ENCODE measurements at regions of chr1 and their contacts with region 1.

Region 1: DNA sequence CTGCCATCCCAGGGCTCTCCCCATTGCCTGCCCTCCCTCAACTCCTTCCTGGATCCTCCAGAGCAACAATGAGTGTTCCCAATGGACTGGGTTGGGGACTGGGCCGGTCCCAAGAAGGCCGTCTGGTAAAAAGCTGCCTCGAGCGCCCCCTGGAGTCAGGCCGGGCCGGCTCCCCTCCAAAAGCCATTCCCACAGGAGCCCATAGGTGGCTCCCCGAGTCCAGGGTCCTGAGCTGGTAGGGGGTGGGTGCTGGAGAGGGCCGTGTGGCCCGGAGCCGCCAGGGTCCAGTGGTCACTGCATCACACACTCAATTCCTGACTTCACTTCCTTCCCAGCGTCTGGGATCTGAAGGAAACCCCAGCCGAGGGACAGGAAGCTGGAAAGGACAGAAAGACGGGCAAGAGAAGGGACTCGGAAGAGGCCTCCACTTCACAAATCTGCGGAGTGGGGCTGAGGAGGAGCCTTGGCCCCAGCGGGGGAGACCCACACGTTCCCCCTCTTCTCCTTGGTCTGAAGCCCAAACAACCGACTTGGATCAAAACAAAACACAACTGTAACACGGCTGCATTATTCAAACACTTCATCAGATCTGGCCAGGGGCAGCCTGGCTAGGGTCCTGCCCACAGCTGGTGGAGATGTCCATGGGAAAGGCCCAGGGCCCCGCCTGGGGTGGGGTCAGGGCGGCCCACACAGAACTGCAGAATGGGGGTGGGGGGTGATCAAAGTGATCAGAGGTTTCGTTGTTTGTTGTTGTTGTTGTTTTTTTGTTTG is 10.9 kb upstream of the ALDH4A1 start:
- DNase-seq: peak; percentile 95
- H3K4me3 ChIP-seq: no peak overlapping the region; a peak in 1 of 4 replicates
- H3K27ac ChIP-seq: no peak overlapping the region
- H3K4me1 ChIP-seq: no peaks in the 10 kb centered on the region; a peak in 1 of 4 replicates
- H3K27me3 ChIP-seq: no peaks in the 10 kb centered on the region
- CTCF ChIP-seq: peak; percentile 98
- EP300 ChIP-seq: no peak
- RAD21 ChIP-seq: peak; percentile 88

Region 2: DNA sequence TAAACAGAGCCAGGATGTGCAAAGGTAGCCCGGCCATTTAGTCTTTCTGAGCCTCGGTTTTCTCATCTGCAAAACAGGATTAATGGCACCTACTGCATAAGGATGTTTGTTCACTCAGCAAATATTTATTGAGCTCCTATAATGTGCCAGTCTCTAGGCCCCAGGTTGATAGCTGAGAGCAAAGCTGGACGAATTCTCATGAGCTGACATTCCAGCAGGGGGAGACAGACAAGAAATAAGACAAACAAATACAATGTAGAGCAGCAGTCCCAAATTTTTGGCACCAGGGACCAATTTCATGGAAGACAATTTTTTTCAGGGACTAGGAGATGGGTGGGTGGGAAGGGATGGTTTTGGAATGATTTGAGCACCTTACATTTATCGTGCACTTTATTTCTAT is 356.9 kb before region 1 on chr1:
- CTCF ChIA-PET with region 1: no interaction called
- POLR2A ChIA-PET with region 1: no interaction called
- DNase-seq: peak; percentile 42
- H3K4me3 ChIP-seq: no peak overlapping the region; a peak in 1 of 4 replicates
- H3K27ac ChIP-seq: no peak overlapping the region
- H3K4me1 ChIP-seq: no peaks in the 10 kb centered on the region
- H3K27me3 ChIP-seq: no peaks in the 10 kb centered on the region; the same call in 1 of the 2 replicates
- CTCF ChIP-seq: peak; percentile 44
- EP300 ChIP-seq: no peak
- RAD21 ChIP-seq: peak; percentile 26

Region 3: GRCh38 chr1:18736958-18737357 is 176.3 kb before region 1 on chr1:
- CTCF ChIA-PET with region 1: no interaction called
- POLR2A ChIA-PET with region 1: no interaction called
- DNase-seq: no peak
- H3K4me3 ChIP-seq: no peak overlapping the region
- H3K27ac ChIP-seq: no peak overlapping the region
- H3K4me1 ChIP-seq: no peaks in the 10 kb centered on the region
- H3K27me3 ChIP-seq: no peaks in the 10 kb centered on the region
- CTCF ChIP-seq: no peak
- EP300 ChIP-seq: no peak
- RAD21 ChIP-seq: no peak

Region 4: GRCh38 chr1:18902523-18903290 is 10.5 kb before region 1 on chr1 and contains the start of gene ALDH4A1:
- CTCF ChIA-PET with region 1: interaction called, 39 read pairs
- POLR2A ChIA-PET with region 1: no interaction called
- DNase-seq: peak; percentile 98
- H3K4me3 ChIP-seq: peak within 1 kb of the TSS; percentile 93 to 94
- H3K27ac ChIP-seq: peak within 1 kb of the TSS; percentile 76 to 93
- H3K4me1 ChIP-seq: peaks cover 9 to 16% of the 10 kb centered on the region in 2 experiments; a peak in 2 of 4 replicates
- H3K27me3 ChIP-seq: no peaks in the 10 kb centered on the region
- CTCF ChIP-seq: no peak
- EP300 ChIP-seq: 0 out of 4 replicates have a peak, but pooled peaks of 1 of the 2 experiments have one; percentile 36
- RAD21 ChIP-seq: no peak
- polyA plus RNA-seq, gene ALDH4A1: 18.5 and 26.2 TPM in 2 replicates

Region 5: DNA sequence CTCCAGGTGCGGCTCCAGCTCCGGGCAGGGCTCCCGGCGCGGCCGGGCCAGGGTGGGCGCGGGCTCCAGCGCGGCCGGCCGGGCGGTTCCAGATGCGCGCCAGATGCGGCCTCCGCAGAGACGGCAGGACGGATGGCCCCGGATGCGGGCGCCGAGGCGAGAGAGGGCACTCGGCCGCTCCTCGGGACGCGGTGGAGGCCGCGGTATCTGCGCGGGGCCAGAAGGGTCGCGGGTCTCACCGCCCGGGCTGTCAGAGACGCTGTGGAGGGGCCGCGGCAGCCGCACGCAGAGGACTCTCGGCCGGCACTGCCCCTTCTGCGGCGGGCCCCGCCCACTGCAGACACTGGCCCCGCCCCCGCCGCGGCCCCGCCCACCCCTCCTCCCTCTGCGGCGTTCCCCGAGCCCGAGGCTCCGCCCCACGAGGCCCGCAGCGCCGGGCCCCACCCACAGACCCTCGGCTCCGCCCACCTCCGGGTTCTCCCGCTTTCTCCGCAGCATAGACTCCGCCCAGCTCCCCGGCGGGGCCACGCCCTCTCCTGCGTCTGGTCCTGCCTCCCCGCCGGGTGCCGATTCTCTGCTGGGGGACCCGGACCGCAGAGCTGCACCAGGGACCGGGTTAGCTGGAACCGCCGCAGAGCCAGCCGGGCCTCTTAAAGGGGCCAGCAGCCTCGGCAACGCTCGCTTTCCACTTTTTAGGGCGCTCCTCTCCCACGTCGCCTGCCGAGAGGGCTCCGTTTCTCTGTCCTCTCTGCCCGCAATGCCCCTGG is 43.3 kb after region 1 on chr1 and contains the start of gene IFFO2:
- CTCF ChIA-PET with region 1: interaction called, 33 read pairs
- POLR2A ChIA-PET with region 1: no interaction called
- DNase-seq: peak; percentile 100
- H3K4me3 ChIP-seq: peak within 1 kb of the TSS; percentile 72 to 77
- H3K27ac ChIP-seq: peak within 1 kb of the TSS in 1 of 2 experiments; percentile 39; a peak in 2 of 4 replicates
- H3K4me1 ChIP-seq: peaks cover 5 to 17% of the 10 kb centered on the region in 2 experiments; a peak in 2 of 4 replicates
- H3K27me3 ChIP-seq: no peaks in the 10 kb centered on the region
- CTCF ChIP-seq: no peak
- EP300 ChIP-seq: no peak
- RAD21 ChIP-seq: no peak
- polyA plus RNA-seq, gene IFFO2: 10.5 TPM in 2 replicates

Region 6: DNA sequence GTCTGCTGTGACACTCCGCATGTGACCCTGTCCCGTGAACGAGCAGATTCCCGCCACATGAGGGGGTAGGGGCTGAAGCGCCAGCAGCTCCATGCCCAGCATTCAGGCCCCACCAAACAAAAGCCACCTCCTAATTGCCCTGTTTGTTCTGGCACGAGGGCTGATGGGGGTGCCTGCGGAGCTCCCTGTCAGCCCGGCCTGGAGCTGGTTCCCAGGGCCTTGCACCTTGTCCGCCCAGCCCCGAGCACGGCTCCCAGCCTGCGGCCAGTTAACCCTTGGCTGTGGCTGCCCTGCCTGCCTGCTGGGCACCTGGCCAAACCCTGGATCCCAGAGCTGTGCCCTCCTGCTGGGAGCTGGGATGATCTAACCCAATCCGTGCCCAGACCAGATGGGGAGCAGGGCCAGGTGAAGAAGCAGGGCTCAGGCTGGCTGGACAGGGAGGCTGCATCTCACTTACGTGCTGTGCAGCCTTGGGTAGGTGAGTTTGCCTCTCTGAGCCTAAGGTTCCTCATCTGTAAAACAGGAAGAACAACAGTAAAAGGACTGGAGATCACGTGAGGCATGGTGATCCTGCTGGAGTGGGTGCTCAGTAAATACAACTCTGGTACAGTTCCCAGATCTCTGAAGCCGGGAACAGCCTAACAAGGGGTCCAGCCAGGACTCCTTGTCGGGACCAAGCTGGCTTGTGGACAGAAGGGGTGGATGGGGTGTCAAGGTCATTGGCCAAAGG is 154.1 kb after region 1 on chr1:
- CTCF ChIA-PET with region 1: interaction called, 44 read pairs
- POLR2A ChIA-PET with region 1: no interaction called
- DNase-seq: peak; percentile 63
- H3K4me3 ChIP-seq: no peak overlapping the region
- H3K27ac ChIP-seq: no peak overlapping the region; a peak in 1 of 4 replicates
- H3K4me1 ChIP-seq: peaks cover 0 to 41% of the 10 kb centered on the region in 2 experiments; a peak in 1 of 4 replicates
- H3K27me3 ChIP-seq: no peaks in the 10 kb centered on the region
- CTCF ChIP-seq: no peak
- EP300 ChIP-seq: no peak
- RAD21 ChIP-seq: no peak

Region 7: GRCh38 chr1:19101244-19101643 is 188.0 kb after region 1 on chr1:
- CTCF ChIA-PET with region 1: interaction called, 149 read pairs
- POLR2A ChIA-PET with region 1: no interaction called
- DNase-seq: no peak
- H3K4me3 ChIP-seq: no peak overlapping the region
- H3K27ac ChIP-seq: no peak overlapping the region
- H3K4me1 ChIP-seq: no peaks in the 10 kb centered on the region
- H3K27me3 ChIP-seq: no peaks in the 10 kb centered on the region
- CTCF ChIP-seq: no peak
- EP300 ChIP-seq: no peak
- RAD21 ChIP-seq: no peak

Region 8: DNA sequence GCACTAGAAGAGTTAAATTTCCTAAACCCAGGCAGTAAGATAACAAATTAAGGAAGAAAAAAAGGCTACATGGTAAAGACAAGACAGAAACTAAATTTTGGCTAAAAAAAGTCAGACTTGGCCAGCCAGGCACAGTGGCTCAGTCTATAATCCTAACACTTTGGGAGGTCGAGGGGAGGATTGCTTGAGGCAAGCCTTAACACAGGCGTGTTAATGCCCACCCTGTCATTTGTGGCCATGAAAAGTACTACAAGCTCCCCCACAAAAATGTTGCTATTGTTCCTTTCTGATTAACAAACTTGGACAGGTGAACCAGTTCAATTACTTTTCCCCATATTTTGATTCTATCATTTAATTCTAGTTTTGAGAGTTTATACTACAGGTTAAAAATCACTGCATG is 264.6 kb after region 1 on chr1:
- CTCF ChIA-PET with region 1: no interaction called
- POLR2A ChIA-PET with region 1: no interaction called
- DNase-seq: no peak
- H3K4me3 ChIP-seq: no peak overlapping the region
- H3K27ac ChIP-seq: no peak overlapping the region
- H3K4me1 ChIP-seq: no peaks in the 10 kb centered on the region
- H3K27me3 ChIP-seq: no peaks in the 10 kb centered on the region
- CTCF ChIP-seq: no peak
- EP300 ChIP-seq: no peak
- RAD21 ChIP-seq: no peak

Measured in SK-N-SH (cell line).